Posterior cingulate gyrus (tissue), 11 donors: ENCODE measurements at regions of chr5 and their contacts with region 1.

Region 1: DNA sequence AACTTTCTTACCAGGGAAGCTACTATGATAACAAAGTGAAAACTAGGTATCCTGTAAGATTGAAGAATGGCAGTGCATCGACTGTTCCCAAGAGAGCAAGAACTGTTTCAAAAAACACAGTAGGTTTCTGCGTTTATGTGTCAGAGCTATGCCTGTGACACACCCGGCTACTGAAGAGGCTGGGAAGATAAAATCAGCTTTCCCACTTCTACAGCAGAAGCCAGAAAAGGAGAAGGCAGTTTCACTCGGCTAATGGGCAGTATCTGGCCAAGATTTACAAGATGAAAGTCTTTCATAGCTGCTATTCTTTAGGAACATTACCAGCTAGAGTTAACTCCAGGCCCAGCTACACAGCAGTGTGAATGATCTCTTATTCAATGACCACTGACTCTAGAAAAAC is 195.2 kb downstream of the CTNND2 start:
- DNase-seq: no peak

Region 2: GRCh38 chr5:11637959-11638358 is 71.0 kb before region 1 on chr5:
- intact Hi-C with region 1: loop called (anchors 10 kb)
- DNase-seq: no peak

Region 3: DNA sequence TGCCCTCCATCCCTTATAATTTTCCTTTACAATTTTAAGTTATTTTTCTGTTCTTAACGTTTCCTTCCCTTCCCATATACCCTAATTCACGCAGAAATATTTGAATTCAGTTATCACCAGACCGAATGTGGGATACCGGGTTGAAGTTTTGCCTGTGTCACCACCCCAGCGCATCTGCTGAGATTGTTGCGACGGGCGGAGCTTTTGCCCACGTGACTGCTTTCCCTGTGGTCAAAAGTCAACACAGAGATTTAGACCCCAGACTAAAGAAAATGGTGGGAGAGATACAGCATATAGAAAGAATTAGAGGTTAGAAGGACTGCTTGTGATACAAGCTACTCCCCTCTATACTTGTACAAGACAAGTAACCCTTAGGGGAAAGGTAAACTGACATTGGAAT is 521.7 kb after region 1 on chr5:
- intact Hi-C with region 1: no loop called
- DNase-seq: peak in 2 of 10 donors; percentile 31 to 57